ENCODE measurements at regions of chr17 and their contacts with region 1.

Region 1: DNA sequence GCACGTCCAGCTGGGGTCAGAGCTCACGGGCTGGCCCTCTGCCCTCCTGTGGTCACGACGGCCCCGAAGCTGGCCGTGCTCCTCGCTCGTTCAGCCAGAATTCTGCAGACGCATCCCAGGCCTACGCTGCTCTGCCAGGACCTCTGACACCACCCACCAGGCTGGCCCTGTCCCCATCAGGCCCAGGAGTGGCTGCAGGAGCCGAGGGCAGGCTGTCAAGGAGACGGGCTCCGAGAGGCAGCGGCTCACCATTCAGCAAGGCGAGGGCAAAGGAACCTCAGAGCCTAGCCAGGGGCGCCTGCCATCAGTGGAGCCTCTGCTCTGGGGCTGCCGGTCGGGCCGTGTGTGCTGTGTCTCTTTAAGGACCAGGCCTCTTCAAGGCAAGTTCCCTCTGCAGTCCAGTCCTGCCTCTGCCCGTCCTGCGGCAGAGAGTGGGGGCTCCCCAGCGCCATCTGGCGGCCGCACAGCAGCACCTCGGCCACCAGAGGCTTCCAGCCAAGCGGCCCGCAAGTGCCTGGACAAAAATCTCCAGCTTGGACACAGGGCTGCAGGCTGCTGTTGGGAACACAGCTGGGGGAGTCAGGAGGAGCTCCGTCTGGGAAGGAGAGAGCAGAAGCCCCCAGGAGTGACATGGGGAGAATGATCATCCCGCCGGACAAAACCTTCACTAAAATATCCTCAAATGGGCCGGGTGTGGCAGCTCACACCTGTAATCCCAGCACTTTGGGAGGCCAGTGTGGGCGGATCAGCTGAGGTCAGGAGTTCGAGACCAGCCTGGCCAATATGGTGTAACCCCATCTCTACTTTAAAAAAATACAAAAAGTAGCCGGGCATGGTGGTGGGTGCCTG is 7.4 kb upstream of the ABR start:
- DNase-seq: peak; percentile 87 to 93
- ATAC-seq: peak; percentile 92 to 96 (median 94)
- H3K4me3 ChIP-seq: peak overlapping the region; percentile 24
- H3K27ac ChIP-seq: no peak overlapping the region
- H3K4me1 ChIP-seq: peaks cover 15% of the 10 kb centered on the region
- H3K27me3 ChIP-seq: peaks cover 0 to 11% (median 4%) of the 10 kb centered on the region in 3 donors
- CTCF ChIP-seq: peak; percentile 98

Region 2: GRCh38 chr17:1067282-1067956 is 119.7 kb before region 1 on chr17:
- intact Hi-C with region 1: no loop called
- DNase-seq: peak; percentile 2 to 19
- ATAC-seq: no peak
- H3K4me3 ChIP-seq: no peak overlapping the region
- H3K27ac ChIP-seq: no peak overlapping the region
- H3K4me1 ChIP-seq: no peaks in the 10 kb centered on the region
- H3K27me3 ChIP-seq: no peaks in the 10 kb centered on the region
- CTCF ChIP-seq: no peak

Region 3: GRCh38 chr17:1122533-1123392 is 64.4 kb before region 1 on chr17:
- intact Hi-C with region 1: loop called (anchors 1 to 2 kb)
- DNase-seq: peak; percentile 85 to 90
- ATAC-seq: peak; percentile 84 to 92 (median 90)
- H3K4me3 ChIP-seq: no peak overlapping the region
- H3K27ac ChIP-seq: peak overlapping the region; percentile 3
- H3K4me1 ChIP-seq: peaks cover 6% of the 10 kb centered on the region
- H3K27me3 ChIP-seq: peaks cover 0 to 30% (median 8%) of the 10 kb centered on the region in 3 donors
- CTCF ChIP-seq: peak; percentile 88

Region 4: DNA sequence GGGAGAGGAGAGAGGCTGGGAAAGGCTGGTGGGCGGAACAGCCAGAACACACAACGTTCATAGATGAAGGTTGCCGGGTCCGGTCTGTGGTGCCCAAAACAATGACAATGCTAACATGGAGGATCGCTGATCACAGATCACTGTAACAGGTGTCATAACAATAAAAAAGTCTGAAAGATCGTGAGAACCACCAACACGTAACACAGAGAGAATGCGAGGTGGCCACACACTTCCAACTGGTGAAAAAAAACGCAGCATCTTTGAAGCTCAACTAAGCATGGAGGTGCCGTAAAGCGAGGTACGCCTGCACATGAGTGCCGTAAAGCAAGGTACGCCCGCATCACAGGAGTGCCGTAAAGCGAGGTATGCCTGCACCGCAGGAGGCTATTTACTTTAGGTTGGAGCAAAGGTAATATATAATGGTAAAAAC is 49.7 kb before region 1 on chr17:
- intact Hi-C with region 1: no loop called
- DNase-seq: no peak
- ATAC-seq: no peak
- H3K4me3 ChIP-seq: no peak overlapping the region
- H3K27ac ChIP-seq: no peak overlapping the region
- H3K4me1 ChIP-seq: peaks cover 4% of the 10 kb centered on the region
- H3K27me3 ChIP-seq: peaks cover 0 to 16% (median 6%) of the 10 kb centered on the region in 3 donors
- CTCF ChIP-seq: no peak